ENCODE measurements at regions of chr1 and their contacts with region 1.

Region 1: GRCh38 chr1:19704247-19705113 is 39.8 kb downstream of the HTR6 start:
- DNase-seq: peak; percentile 52
- H3K4me3 Mint-ChIP-seq: no peak overlapping the region
- H3K27ac Mint-ChIP-seq: no peak overlapping the region
- H3K4me1 Mint-ChIP-seq: no peaks in the 10 kb centered on the region
- H3K27me3 Mint-ChIP-seq: no peaks in the 10 kb centered on the region
- CTCF ChIP-seq: peak; percentile 81

Region 2: DNA sequence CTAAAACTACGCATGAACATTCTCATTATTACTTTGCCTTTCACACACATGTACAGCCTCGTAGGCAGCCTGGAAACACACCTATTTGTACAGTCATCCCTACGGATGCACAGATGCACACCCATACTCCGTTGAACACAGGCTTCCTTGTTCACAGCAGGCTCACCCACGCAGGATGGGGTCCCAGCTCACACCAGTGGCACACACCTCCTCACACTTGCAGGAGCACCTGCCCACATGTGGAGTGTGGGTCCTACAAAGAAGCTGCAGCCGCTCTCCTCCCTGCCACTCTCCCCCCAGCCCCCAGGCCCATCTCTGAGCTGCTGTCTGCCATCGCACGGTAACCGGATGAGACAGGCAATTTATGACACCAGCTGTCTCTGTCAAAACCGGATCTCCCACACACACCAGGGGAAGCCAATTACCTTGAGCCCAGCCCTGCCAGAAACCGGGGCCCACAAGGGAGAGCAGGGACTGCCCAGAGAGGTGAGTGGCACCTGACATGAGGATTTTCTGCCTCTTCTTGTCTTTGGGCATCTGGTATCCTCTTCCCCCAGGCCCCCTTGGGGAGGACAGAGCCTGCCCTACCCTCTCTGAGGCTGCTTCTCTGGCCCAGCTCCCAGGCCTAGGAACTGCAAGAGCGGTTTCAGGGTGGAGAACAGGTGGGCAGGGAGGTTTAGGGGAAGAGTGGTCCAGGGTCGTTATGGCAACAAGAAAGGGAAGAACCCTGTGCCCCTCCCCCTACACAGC is 1421.5 kb before region 1 on chr1:
- CTCF ChIA-PET with region 1: no interaction called
- POLR2A ChIA-PET with region 1: no interaction called
- intact Hi-C with region 1: no loop called
- DNase-seq: no peak
- H3K4me3 Mint-ChIP-seq: no peak overlapping the region
- H3K27ac Mint-ChIP-seq: no peak overlapping the region
- H3K4me1 Mint-ChIP-seq: no peaks in the 10 kb centered on the region
- H3K27me3 Mint-ChIP-seq: peaks cover 38% of the 10 kb centered on the region
- CTCF ChIP-seq: no peak

Region 3: GRCh38 chr1:19525607-19526545 is 178.6 kb before region 1 on chr1:
- CTCF ChIA-PET with region 1: no interaction called
- POLR2A ChIA-PET with region 1: no interaction called
- intact Hi-C with region 1: no loop called
- DNase-seq: no peak
- H3K4me3 Mint-ChIP-seq: no peak overlapping the region
- H3K27ac Mint-ChIP-seq: no peak overlapping the region
- H3K4me1 Mint-ChIP-seq: no peaks in the 10 kb centered on the region
- H3K27me3 Mint-ChIP-seq: no peaks in the 10 kb centered on the region
- CTCF ChIP-seq: no peak

Region 4: GRCh38 chr1:19676438-19676922 is 28.0 kb before region 1 on chr1:
- CTCF ChIA-PET with region 1: interaction called, 18 read pairs
- POLR2A ChIA-PET with region 1: interaction called, 3 read pairs
- intact Hi-C with region 1: no loop called
- DNase-seq: peak; percentile 86
- H3K4me3 Mint-ChIP-seq: no peak overlapping the region
- H3K27ac Mint-ChIP-seq: no peak overlapping the region
- H3K4me1 Mint-ChIP-seq: peaks cover 9% of the 10 kb centered on the region
- H3K27me3 Mint-ChIP-seq: no peaks in the 10 kb centered on the region
- CTCF ChIP-seq: no peak

Region 5: DNA sequence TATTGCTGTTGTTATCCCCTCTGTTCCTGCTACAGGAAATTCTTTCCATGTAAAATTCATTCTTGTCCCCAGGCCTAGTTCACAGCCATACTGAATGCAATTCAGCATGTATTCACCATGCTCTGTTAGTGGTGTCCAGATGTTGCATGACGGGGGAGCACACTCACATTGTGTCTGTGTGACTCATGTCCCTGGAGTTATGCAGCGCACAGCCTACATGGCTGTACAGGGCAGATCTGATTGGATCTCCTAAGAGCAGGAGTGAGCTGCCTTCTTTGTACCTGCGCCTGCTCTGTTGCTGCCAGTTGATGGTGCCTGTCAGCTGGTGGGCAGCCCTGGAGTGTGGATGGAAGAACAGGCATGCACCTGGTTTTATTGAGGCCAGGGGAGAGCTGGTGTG is 22.2 kb before region 1 on chr1:
- CTCF ChIA-PET with region 1: interaction called, 18 read pairs
- POLR2A ChIA-PET with region 1: interaction called, 3 read pairs
- intact Hi-C with region 1: no loop called
- DNase-seq: peak; percentile 75
- H3K4me3 Mint-ChIP-seq: no peak overlapping the region
- H3K27ac Mint-ChIP-seq: no peak overlapping the region
- H3K4me1 Mint-ChIP-seq: peaks cover 8% of the 10 kb centered on the region
- H3K27me3 Mint-ChIP-seq: no peaks in the 10 kb centered on the region
- CTCF ChIP-seq: no peak

Region 6: GRCh38 chr1:19715334-19716203 is 11.1 kb after region 1 on chr1:
- CTCF ChIA-PET with region 1: interaction called, 13 read pairs
- POLR2A ChIA-PET with region 1: interaction called, 3 read pairs
- intact Hi-C with region 1: no loop called
- DNase-seq: peak; percentile 95
- H3K4me3 Mint-ChIP-seq: no peak overlapping the region
- H3K27ac Mint-ChIP-seq: peak overlapping the region; percentile 50
- H3K4me1 Mint-ChIP-seq: no peaks in the 10 kb centered on the region
- H3K27me3 Mint-ChIP-seq: no peaks in the 10 kb centered on the region
- CTCF ChIP-seq: peak; percentile 75

Region 7: GRCh38 chr1:19892628-19893168 is 188.2 kb after region 1 on chr1:
- CTCF ChIA-PET with region 1: no interaction called
- POLR2A ChIA-PET with region 1: no interaction called
- intact Hi-C with region 1: no loop called
- DNase-seq: no peak
- H3K4me3 Mint-ChIP-seq: no peak overlapping the region
- H3K27ac Mint-ChIP-seq: peak overlapping the region; percentile 62
- H3K4me1 Mint-ChIP-seq: peaks cover 18% of the 10 kb centered on the region
- H3K27me3 Mint-ChIP-seq: no peaks in the 10 kb centered on the region
- CTCF ChIP-seq: no peak